Activated naive CD4-positive, alpha-beta T cell treated with anti-CD3 and anti-CD28 coated beads for 36 hours (primary cell): ENCODE measurements at regions of chr2 and their contacts with region 1.

Region 1: GRCh38 chr2:106193977-106194778 is at the start of gene UXS1:
- DNase-seq: peak; percentile 98
- H3K4me3 Mint-ChIP-seq: peak within 1 kb of the TSS; percentile 86
- H3K27ac Mint-ChIP-seq: peak within 1 kb of the TSS; percentile 83
- H3K4me1 Mint-ChIP-seq: peaks cover 44% of the 10 kb centered on the region
- H3K27me3 Mint-ChIP-seq: no peaks in the 10 kb centered on the region
- total RNA-seq, gene UXS1: 36.2 to 41.9 TPM

Region 2: GRCh38 chr2:105329561-105330495 is 864.4 kb before region 1 on chr2 and contains the start of gene TGFBRAP1:
- CTCF ChIA-PET with region 1: no interaction called
- intact Hi-C with region 1: loop called (anchors 1 kb)
- DNase-seq: peak; percentile 51
- H3K4me3 Mint-ChIP-seq: peak within 1 kb of the TSS; percentile 87
- H3K27ac Mint-ChIP-seq: peak within 1 kb of the TSS; percentile 93
- H3K4me1 Mint-ChIP-seq: peaks cover 37% of the 10 kb centered on the region
- H3K27me3 Mint-ChIP-seq: no peaks in the 10 kb centered on the region
- total RNA-seq, gene TGFBRAP1: 13.6 to 15.3 TPM

Region 3: GRCh38 chr2:105789745-105790460 is 404.3 kb before region 1 on chr2:
- CTCF ChIA-PET with region 1: no interaction called
- intact Hi-C with region 1: loop called (anchors 5 kb)
- DNase-seq: peak; percentile 86
- H3K4me3 Mint-ChIP-seq: peak overlapping the region; percentile 65
- H3K27ac Mint-ChIP-seq: peak overlapping the region; percentile 88
- H3K4me1 Mint-ChIP-seq: peaks cover 94% of the 10 kb centered on the region
- H3K27me3 Mint-ChIP-seq: no peaks in the 10 kb centered on the region

Region 4: GRCh38 chr2:106143495-106144215 is 50.5 kb before region 1 on chr2:
- CTCF ChIA-PET with region 1: interaction called, 8 read pairs
- intact Hi-C with region 1: loop called (anchors 1 kb)
- DNase-seq: no peak
- H3K4me3 Mint-ChIP-seq: no peak overlapping the region
- H3K27ac Mint-ChIP-seq: peak overlapping the region; percentile 66
- H3K4me1 Mint-ChIP-seq: peaks cover 77% of the 10 kb centered on the region
- H3K27me3 Mint-ChIP-seq: no peaks in the 10 kb centered on the region

Region 5: DNA sequence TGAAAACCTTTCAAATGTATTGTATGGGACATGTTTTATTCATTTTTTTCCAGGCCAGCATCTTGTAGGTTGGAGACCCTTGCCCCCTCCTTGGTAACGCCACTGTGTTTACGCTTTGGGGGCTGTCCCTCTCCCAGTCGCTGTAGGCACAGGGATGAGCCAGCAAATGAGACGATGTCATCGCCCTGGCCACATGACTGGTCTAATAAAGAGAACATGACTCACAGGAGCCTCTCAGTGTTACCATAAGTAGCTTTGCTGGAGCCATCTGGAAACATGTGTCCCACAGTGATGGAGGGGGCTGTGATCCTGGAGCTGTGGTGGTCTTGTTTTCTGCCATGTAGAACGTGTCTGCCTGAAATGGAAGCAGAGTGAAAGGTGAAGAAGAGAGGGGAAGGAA is 371.9 kb after region 1 on chr2:
- CTCF ChIA-PET with region 1: no interaction called
- intact Hi-C with region 1: loop called (anchors 1 kb)
- DNase-seq: peak; percentile 85
- H3K4me3 Mint-ChIP-seq: peak overlapping the region; percentile 8
- H3K27ac Mint-ChIP-seq: peak overlapping the region; percentile 82
- H3K4me1 Mint-ChIP-seq: peaks cover 42% of the 10 kb centered on the region
- H3K27me3 Mint-ChIP-seq: no peaks in the 10 kb centered on the region